Activated naive CD4-positive, alpha-beta T cell treated with anti-CD3 and anti-CD28 coated beads for 36 hours (primary cell): ENCODE measurements at regions of chr19 and their contacts with region 1.

Region 1: DNA sequence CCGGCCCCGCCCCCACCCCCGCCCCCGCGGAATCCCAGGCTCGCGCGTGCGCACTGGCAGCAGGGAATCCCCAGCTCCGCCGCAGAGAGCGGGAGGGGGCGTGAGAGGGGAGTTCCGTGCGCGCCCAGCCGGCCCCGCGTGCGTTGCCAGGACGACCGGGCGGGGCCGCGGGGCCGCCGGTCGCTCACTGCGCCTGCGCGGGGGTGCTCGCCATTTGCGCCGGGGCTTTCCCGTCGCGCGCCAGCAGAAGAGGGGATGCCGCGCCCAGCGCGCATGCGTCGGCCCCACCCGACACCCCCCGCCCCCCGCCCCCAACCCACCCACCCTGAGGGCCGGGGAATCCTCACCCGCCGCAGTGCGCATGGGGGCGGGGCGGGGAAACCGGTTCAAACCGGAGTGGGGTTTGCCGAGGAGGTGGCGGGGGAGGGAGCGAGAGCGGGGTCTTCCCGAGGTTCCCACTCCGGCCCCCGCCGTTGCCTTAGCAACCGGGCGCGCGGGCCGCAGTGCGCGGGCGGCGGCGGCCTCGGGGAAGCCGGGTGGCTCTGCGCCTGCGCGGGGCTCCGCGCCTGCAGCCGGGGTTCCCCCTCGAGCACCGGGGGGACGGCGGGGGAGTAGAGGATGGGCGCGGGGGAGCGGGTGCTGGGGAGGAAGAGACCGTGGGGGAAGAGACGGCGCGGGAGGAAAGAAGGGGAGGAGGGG is 15.1 kb downstream of the CCDC124 start:
- DNase-seq: peak; percentile 94
- H3K4me3 Mint-ChIP-seq: peak overlapping the region; percentile 58
- H3K27ac Mint-ChIP-seq: no peak overlapping the region
- H3K4me1 Mint-ChIP-seq: peaks cover 49% of the 10 kb centered on the region
- H3K27me3 Mint-ChIP-seq: peaks cover 35% of the 10 kb centered on the region

Region 2: GRCh38 chr19:17932485-17933338 is 15.3 kb before region 1 on chr19 and contains the start of gene CCDC124:
- CTCF ChIA-PET with region 1: interaction called, 14 read pairs
- intact Hi-C with region 1: no loop called
- DNase-seq: peak; percentile 95
- H3K4me3 Mint-ChIP-seq: peak within 1 kb of the TSS; percentile 95
- H3K27ac Mint-ChIP-seq: peak within 1 kb of the TSS; percentile 96
- H3K4me1 Mint-ChIP-seq: peaks cover 25% of the 10 kb centered on the region
- H3K27me3 Mint-ChIP-seq: no peaks in the 10 kb centered on the region
- total RNA-seq, gene CCDC124: 107 to 118 TPM

Region 3: GRCh38 chr19:18007044-18007916 is 59.3 kb after region 1 on chr19:
- CTCF ChIA-PET with region 1: no interaction called
- intact Hi-C with region 1: no loop called
- DNase-seq: peak; percentile 84
- H3K4me3 Mint-ChIP-seq: peak overlapping the region; percentile 75
- H3K27ac Mint-ChIP-seq: peak overlapping the region; percentile 81
- H3K4me1 Mint-ChIP-seq: peaks cover 48% of the 10 kb centered on the region
- H3K27me3 Mint-ChIP-seq: no peaks in the 10 kb centered on the region

Region 4: DNA sequence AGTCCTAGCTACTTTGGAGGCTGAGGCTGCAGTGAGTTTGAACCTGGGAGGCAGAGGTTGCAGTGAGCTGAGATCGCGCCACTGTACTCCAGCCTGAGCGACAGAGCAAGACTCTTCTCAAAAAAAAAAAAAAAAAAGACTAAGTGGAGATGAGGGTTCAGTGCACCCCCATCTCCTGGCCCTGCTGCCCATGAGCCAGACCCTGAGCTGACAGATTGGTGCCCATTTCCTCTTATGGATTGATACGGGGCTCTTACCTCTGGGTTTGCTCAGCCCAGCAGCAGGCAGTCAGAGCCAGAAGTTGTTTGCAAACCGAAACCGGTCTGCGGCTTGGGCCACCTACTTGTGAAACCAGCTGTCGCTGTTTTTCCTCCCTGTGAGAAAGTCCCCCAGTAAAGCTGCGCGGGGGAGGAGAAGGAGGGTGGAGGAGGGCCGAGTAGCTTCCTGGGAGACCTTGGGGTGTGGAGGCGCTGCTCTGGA is 96.9 kb after region 1 on chr19:
- CTCF ChIA-PET with region 1: no interaction called
- intact Hi-C with region 1: loop called (anchors 1 kb)
- DNase-seq: peak; percentile 98
- H3K4me3 Mint-ChIP-seq: peak overlapping the region; percentile 64
- H3K27ac Mint-ChIP-seq: peak overlapping the region; percentile 21
- H3K4me1 Mint-ChIP-seq: peaks cover 42% of the 10 kb centered on the region
- H3K27me3 Mint-ChIP-seq: peaks cover 3% of the 10 kb centered on the region

Region 5: DNA sequence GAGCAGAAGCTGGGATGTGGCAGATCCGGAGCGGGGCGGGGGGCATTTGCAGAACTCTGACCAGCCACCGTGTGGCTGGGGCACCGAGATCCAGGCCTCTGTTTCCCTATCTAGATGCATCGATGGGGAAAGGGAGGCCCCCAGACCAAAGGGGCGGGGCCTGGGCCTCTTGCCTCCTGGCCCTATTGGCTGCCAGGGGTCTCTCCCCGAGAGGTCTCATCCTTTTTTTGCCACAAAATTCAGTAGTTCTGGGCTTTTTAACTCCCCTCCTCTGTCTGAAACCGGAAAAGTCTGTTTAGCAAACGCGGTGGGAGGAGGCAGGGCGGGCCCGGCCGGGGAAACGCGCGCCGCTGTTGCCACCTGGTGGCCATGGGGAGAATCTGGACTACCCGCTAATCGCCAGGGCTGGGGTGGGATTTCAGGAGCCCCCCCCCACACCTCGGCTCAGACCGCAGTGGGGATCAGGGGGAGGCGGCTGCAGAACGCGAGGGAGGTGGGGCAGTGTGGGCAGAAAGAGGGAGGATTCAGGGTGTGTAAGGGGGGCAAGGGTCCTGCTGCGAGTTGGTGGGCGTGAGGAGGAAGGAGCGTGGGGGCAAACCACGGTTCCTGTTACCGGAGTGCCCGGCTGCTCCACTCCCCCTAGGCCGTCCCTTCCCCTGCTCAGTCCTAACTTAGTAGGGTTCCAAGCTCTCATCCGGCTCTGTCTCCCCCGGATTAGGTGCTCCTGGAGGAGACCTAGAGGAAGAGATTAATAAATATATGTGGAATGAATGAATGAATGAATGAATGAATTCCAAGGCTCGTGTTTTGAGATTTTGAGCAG is 110.5 kb after region 1 on chr19:
- CTCF ChIA-PET with region 1: interaction called, 5 read pairs
- intact Hi-C with region 1: loop called (anchors 2 kb)
- DNase-seq: peak; percentile 86
- H3K4me3 Mint-ChIP-seq: no peak overlapping the region
- H3K27ac Mint-ChIP-seq: peak overlapping the region; percentile 59
- H3K4me1 Mint-ChIP-seq: peaks cover 11% of the 10 kb centered on the region
- H3K27me3 Mint-ChIP-seq: no peaks in the 10 kb centered on the region

Region 6: GRCh38 chr19:18091217-18091608 is 143.2 kb after region 1 on chr19:
- CTCF ChIA-PET with region 1: no interaction called
- intact Hi-C with region 1: loop called (anchors 1 kb)
- DNase-seq: peak; percentile 94
- H3K4me3 Mint-ChIP-seq: peak overlapping the region; percentile 61
- H3K27ac Mint-ChIP-seq: peak overlapping the region; percentile 97
- H3K4me1 Mint-ChIP-seq: peaks cover 59% of the 10 kb centered on the region
- H3K27me3 Mint-ChIP-seq: no peaks in the 10 kb centered on the region

Region 7: DNA sequence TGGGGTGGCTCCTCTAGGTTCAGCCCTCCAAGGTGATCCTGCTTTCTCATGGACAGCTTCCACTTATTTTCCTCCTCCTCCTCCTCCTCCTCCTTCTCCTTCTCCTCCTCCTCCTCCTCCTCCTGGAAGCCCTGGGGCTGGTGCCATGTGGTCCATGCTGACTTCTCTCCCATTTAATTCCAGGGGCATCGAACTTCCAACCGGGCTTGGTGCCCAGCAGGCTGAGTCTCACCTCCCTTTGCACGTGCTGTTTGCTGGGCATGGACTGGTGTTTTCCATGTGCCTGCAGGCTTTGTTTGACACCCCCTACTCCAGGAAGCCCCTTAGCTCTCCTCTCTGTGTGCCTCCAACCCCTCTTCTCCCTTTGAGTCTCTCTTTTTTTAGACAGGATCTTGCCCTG is 153.3 kb after region 1 on chr19:
- CTCF ChIA-PET with region 1: no interaction called
- intact Hi-C with region 1: no loop called
- DNase-seq: no peak
- H3K4me3 Mint-ChIP-seq: no peak overlapping the region
- H3K27ac Mint-ChIP-seq: no peak overlapping the region
- H3K4me1 Mint-ChIP-seq: peaks cover 34% of the 10 kb centered on the region
- H3K27me3 Mint-ChIP-seq: no peaks in the 10 kb centered on the region

Region 8: DNA sequence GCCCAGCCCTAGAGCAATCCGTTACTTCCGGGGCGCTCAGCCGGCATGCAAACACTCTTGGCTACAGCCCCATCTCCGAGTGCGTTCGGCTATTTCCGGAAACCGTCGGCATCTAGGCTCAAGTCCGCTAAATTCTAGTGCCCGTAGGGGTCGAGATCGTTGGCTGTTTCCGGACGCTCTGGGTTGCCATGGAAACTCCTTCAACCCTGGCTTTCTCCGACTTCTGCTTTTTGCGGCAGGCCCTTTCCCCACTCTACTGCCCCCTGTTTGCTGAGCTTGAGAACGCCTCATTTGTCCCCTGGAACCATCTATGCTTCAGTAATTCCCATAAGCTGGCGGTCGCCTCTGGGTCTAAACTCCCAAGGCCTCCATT is 204.5 kb after region 1 on chr19:
- CTCF ChIA-PET with region 1: no interaction called
- intact Hi-C with region 1: loop called (anchors 2 kb)
- DNase-seq: peak; percentile 100
- H3K4me3 Mint-ChIP-seq: peak overlapping the region; percentile 79
- H3K27ac Mint-ChIP-seq: peak overlapping the region; percentile 93
- H3K4me1 Mint-ChIP-seq: peaks cover 22% of the 10 kb centered on the region
- H3K27me3 Mint-ChIP-seq: no peaks in the 10 kb centered on the region